AG04449 (cell line): ENCODE measurements at regions of chr3 and their contacts with region 1.

Region 1: GRCh38 chr3:194472290-194472920 is 14.4 kb downstream of the ATP13A3 start:
- DNase-seq: no peak
- H3K4me3 ChIP-seq: no peak overlapping the region
- CTCF ChIP-seq: peak; percentile 83

Region 2: DNA sequence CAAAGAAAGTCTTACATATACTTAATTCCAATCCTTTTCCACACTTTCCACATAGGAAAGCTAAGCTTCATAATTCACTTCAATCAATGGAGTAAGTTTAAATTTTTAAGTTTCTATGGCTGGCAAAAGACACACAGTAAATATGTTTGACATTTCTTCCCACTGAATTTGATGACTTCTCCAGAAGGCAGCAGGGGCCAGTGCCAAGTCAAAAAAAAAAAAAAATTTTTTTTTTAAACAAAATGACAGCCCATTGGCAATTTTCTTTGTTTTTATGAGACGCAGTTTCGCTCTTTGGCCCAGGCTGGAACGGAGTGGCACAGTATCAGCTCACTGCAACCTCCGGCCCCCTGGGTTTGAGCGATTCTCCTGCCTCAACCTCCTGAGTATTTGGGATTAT is 14.3 kb before region 1 on chr3:
- CTCF ChIA-PET with region 1: interaction called, 15 read pairs
- POLR2A ChIA-PET with region 1: no interaction called
- DNase-seq: no peak
- H3K4me3 ChIP-seq: no peak overlapping the region
- CTCF ChIP-seq: no peak

Region 3: DNA sequence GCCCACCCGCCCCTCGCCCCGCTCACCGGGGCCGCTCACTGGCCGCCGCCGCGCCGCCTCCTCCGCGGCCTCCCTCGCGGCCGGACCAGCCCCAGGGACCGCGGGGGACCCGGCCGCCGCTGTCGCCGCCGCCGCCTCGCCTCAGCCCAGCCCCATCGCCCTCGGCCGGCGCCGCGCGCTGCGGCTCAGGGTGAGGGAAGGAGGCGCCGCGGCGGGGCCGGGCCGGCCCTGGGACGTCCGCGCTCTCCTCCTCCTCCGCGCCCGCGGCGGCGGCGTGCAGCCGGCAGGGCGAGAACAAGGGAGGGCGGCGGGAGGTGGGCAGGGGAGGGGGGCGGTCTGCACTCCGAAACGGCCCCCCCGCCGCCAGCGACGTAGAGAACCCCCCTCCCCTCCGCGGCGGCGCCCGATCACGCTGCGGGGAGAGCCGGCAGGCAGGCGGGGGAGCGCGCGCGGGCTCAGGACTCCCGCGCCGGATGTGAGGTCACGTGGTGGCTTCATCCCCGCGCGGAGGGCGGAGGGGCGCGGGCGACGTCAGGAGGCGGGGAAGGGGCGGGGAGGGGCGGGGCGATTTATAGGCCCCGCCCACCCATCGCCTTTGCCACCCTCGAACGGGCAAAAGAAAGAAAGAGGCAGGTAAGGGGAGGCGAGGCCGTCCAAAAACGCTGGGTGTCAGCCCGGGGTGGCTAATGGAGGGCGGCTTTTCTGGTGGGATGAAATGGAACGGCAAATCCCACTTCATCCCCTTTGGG is 14.3 kb after region 1 on chr3 and contains the start of gene ATP13A3:
- CTCF ChIA-PET with region 1: interaction called, 43 read pairs
- POLR2A ChIA-PET with region 1: no interaction called
- DNase-seq: no peak
- H3K4me3 ChIP-seq: peak within 1 kb of the TSS; percentile 84
- CTCF ChIP-seq: no peak

Region 4: GRCh38 chr3:194573691-194574437 is 101.5 kb after region 1 on chr3:
- CTCF ChIA-PET with region 1: interaction called, 42 read pairs
- POLR2A ChIA-PET with region 1: no interaction called
- DNase-seq: no peak
- H3K4me3 ChIP-seq: no peak overlapping the region
- CTCF ChIP-seq: peak; percentile 67

Region 5: DNA sequence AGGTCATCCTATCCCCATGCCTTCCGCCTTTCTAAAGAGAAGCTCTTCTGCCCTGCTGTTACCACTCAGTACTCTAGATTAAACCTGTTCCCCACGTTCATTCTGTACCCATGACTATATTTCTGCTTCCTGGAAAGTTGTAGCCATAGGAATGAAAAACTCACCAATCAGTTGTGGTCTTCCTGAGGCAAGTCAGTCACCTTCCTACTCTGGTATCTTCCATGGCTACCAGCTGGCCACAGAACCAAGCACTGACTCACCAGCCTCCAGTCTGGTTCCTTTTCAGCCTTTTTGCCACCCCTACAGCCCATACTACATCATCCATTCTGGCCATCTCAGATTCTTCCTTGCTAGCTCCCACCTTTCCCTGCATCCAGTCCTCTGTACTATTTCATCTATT is 114.4 kb after region 1 on chr3:
- CTCF ChIA-PET with region 1: interaction called, 130 read pairs
- POLR2A ChIA-PET with region 1: interaction called, 3 read pairs
- DNase-seq: no peak
- H3K4me3 ChIP-seq: no peak overlapping the region
- CTCF ChIP-seq: no peak

Region 6: GRCh38 chr3:194592798-194593752 is 120.7 kb after region 1 on chr3:
- CTCF ChIA-PET with region 1: interaction called, 130 read pairs
- POLR2A ChIA-PET with region 1: interaction called, 3 read pairs
- DNase-seq: peak; percentile 100
- H3K4me3 ChIP-seq: no peak overlapping the region
- CTCF ChIP-seq: no peak

Region 7: DNA sequence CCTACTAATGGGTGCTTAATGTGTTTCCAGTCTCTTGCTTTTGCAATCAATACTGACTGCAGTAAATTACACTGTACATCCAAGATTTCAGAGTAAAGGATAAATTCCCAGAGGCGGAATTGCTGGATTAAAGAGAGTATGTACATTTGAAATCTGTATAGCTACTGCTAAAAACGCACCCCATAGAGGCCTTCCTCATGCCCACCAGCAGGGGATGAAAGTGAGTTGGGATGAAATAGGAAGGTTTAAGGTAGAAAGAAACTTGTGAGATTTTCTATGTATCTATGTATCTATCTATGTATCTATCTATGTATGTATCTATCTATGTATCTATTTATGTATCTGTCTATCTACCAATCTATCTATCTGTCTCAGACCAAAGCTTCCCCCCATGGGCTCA is 132.4 kb after region 1 on chr3:
- CTCF ChIA-PET with region 1: interaction called, 11 read pairs
- POLR2A ChIA-PET with region 1: no interaction called
- DNase-seq: no peak
- H3K4me3 ChIP-seq: no peak overlapping the region
- CTCF ChIP-seq: peak; percentile 44